Activated CD8-positive, alpha-beta memory T cell treated with anti-CD3 and anti-CD28 coated beads, Interleukin-2, amount 10 ng/mL, durations not matched to agents 7 days and 5 days (primary cell): ENCODE measurements at regions of chr12 and their contacts with region 1.

Region 1: DNA sequence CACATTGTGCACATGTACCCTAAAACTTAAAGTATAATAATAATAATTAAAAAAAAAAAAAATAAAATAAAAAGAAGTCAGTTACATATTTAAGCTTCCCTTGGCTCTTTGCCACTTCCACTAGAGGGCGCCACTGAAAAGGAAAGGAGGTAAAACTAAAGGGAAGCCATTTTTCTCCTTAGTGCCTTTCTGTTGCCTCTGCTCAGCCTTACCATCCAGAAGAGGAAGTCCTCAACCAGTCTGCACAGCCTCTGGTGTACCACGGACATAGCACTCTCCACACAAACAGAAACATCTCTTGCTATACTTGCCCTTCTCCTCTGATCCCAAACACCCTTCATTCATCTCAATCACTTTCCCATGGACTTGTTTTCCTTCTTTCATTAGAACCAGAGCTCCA is 169.0 kb upstream of the EEA1 start:
- DNase-seq: peak; percentile 77
- ATAC-seq: peak; percentile 67
- H3K4me3 Mint-ChIP-seq: no peak overlapping the region
- H3K27ac Mint-ChIP-seq: peak overlapping the region; percentile 2
- H3K4me1 Mint-ChIP-seq: peaks cover 16% of the 10 kb centered on the region
- H3K27me3 Mint-ChIP-seq: peaks cover 2% of the 10 kb centered on the region

Region 2: GRCh38 chr12:93002293-93003054 is 95.6 kb before region 1 on chr12:
- CTCF ChIA-PET with region 1: no interaction called
- DNase-seq: no peak
- ATAC-seq: no peak
- H3K4me3 Mint-ChIP-seq: no peak overlapping the region
- H3K27ac Mint-ChIP-seq: no peak overlapping the region
- H3K4me1 Mint-ChIP-seq: peaks cover 1% of the 10 kb centered on the region
- H3K27me3 Mint-ChIP-seq: peaks cover 3% of the 10 kb centered on the region

Region 3: GRCh38 chr12:93108985-93109384 is 10.9 kb after region 1 on chr12:
- CTCF ChIA-PET with region 1: interaction called, 21 read pairs
- DNase-seq: no peak
- ATAC-seq: no peak
- H3K4me3 Mint-ChIP-seq: no peak overlapping the region
- H3K27ac Mint-ChIP-seq: no peak overlapping the region
- H3K4me1 Mint-ChIP-seq: no peaks in the 10 kb centered on the region
- H3K27me3 Mint-ChIP-seq: peaks cover 3% of the 10 kb centered on the region

Region 4: DNA sequence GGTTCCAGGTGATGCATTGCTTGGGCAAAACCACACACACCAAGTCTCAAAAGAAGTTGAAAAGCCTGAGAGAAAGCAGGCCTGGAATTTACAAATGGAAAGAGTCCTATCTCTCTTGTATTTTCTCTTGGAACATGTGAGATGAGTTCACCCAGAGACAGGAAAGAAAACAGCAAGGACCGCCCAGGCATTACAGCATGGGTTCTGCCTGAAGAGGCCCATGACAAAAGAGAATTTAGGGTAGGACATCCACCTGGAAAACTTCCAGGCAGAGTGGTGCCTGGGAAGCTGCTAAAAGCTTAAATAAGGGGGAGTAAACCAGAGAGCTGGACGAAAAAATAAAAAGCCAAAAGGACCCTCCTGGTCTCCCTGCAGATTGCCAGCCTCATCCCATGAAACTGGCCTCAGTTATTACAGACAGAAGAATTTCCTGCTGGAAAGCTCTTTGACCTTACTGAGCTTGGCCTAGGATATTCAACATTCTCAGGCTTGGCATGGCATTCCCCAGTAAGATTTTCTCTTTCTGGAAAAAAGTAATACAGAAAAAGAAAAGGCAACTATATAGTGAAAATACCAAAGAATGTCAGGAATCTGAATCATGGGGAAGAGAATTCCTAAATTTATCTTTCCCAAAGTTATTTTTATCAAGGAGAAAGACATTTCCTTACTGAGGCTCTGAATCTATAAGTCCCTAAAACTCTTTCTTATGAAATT is 158.3 kb after region 1 on chr12:
- CTCF ChIA-PET with region 1: no interaction called
- DNase-seq: no peak
- ATAC-seq: no peak
- H3K4me3 Mint-ChIP-seq: no peak overlapping the region
- H3K27ac Mint-ChIP-seq: no peak overlapping the region
- H3K4me1 Mint-ChIP-seq: no peaks in the 10 kb centered on the region
- H3K27me3 Mint-ChIP-seq: no peaks in the 10 kb centered on the region

Region 5: GRCh38 chr12:93397412-93397811 is 299.3 kb after region 1 on chr12:
- CTCF ChIA-PET with region 1: interaction called, 11 read pairs
- DNase-seq: no peak
- ATAC-seq: no peak
- H3K4me3 Mint-ChIP-seq: no peak overlapping the region
- H3K27ac Mint-ChIP-seq: no peak overlapping the region
- H3K4me1 Mint-ChIP-seq: peaks cover under 1% of the 10 kb centered on the region
- H3K27me3 Mint-ChIP-seq: no peaks in the 10 kb centered on the region